Panc1 (cell line): ENCODE measurements at regions of chr20 and their contacts with region 1.

Region 1: GRCh38 chr20:15528391-15529111 is 1044.7 kb downstream of the KIF16B start:
- DNase-seq: no peak
- ATAC-seq: no peak
- H3K4me3 ChIP-seq: no peak overlapping the region
- H3K27ac ChIP-seq: no peak overlapping the region
- H3K4me1 ChIP-seq: no peaks in the 10 kb centered on the region
- H3K27me3 ChIP-seq: no peaks in the 10 kb centered on the region
- CTCF ChIP-seq: no peak

Region 2: GRCh38 chr20:14764511-14765373 is 763.8 kb before region 1 on chr20:
- CTCF ChIA-PET with region 1: no interaction called
- POLR2A ChIA-PET with region 1: interaction called, 11 read pairs
- in situ Hi-C with region 1: no loop called
- intact Hi-C with region 1: no loop called
- DNase-seq: no peak
- ATAC-seq: no peak
- H3K4me3 ChIP-seq: no peak overlapping the region
- H3K27ac ChIP-seq: no peak overlapping the region
- H3K4me1 ChIP-seq: no peaks in the 10 kb centered on the region
- H3K27me3 ChIP-seq: no peaks in the 10 kb centered on the region
- CTCF ChIP-seq: no peak

Region 3: DNA sequence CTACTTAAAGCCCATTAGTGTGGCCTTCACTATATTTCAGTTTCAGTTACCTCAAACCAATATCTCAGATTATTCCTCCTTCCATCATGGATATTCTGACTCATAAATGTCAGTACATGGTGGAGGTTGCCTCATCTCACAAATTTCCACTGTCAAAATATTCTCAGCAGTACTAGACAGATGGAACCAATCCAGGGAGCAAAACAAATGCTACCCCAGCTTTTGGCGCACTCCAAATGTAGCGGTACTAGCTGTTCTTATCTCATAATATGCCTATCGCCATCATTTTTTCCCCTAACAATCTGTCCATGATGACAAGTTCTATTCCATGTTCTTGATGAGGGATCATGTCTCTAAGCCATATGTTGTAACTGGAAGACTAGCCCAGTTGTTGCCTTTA is 18.6 kb after region 1 on chr20:
- CTCF ChIA-PET with region 1: no interaction called
- POLR2A ChIA-PET with region 1: no interaction called
- in situ Hi-C with region 1: no loop called
- intact Hi-C with region 1: no loop called
- DNase-seq: no peak
- ATAC-seq: no peak
- H3K4me3 ChIP-seq: no peak overlapping the region
- H3K27ac ChIP-seq: no peak overlapping the region
- H3K4me1 ChIP-seq: no peaks in the 10 kb centered on the region
- H3K27me3 ChIP-seq: no peaks in the 10 kb centered on the region
- CTCF ChIP-seq: no peak